ENCODE measurements at regions of chr21 and their contacts with region 1.

Region 1: DNA sequence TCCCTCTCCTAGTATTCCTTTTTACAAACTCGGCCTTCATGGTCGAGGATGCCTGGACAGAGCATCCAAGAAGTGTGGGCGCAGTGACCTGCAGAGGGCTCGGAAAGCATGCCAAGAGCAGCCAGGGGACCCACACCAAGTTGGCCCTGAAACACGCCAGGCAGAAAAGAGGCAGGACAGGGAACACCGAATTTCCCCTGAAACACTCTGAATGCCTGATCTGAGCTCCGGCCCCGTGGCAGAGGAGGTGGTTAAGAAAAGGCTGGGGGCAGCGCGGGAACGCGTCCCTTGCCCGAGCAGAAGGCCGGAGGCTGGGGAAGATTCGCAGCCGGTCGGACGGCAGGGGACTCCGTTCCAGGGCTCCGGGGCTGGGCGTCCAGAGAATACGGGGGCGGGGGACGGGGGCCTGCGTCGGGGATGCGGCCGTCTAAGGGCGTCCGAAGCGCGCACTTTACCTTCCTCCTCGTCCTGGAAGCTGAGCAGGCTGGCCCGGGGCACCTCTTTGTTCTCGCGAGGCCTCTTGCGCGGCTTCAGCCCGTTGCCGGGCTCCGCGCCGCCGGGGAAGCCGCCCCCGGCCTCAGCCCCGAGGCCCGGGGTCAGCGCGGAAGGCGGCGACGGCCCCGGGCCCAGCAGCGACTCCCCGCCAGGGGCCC is 558 bp downstream of the PAXBP1 start:
- DNase-seq: peak; percentile 83
- H3K4me3 ChIP-seq: peak overlapping the region; percentile 88
- H3K27ac ChIP-seq: peak overlapping the region; percentile 87
- H3K4me1 ChIP-seq: peaks cover 26% of the 10 kb centered on the region
- CTCF ChIP-seq: no peak

Region 2: DNA sequence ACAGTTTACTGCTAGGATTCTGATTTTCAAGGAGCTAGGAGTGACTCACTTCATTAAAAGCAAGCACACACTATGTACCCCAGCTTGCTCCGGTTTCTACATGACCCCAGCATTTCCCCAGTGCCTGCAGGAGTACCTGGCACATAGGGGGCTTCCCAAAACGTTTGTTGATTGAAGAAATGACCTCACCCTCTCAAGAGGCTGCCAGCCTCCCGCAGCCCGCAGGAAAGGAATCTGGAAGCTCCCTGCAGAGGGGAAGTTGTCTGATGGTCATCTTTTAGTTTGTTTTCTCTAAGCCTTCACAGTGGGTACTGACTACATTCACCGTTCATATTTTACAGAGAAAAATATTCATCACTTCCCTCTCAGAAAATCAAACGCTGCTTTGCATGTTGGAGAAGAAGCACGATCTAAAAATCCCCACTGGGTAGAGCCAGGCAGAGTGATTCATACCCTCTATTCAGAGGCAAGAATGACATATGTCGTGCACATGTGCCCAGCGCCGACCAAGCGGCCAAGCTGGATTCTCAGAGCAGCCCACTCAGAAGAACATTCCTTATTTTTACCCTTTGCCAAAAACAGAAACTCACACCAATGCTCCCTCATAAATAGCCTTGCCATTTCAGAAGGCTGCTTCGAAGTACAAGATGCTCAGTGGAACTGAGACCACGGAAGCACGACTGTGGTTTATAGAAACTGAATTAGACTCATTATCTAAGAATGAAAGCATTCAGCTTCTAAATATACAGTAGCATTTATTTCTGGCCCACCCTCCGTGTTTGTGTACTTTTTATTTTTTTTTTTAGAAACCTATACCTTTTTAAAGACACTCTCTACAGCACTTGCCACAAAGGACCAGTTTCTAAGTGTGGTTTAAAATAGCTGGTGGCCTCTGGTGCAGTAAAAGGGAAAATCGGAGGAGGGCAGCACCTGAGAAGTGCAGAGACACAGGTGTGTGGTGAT is 635.3 kb before region 1 on chr21:
- CTCF ChIA-PET with region 1: no interaction called
- POLR2A ChIA-PET with region 1: no interaction called
- intact Hi-C with region 1: no loop called
- DNase-seq: no peak
- H3K4me3 ChIP-seq: no peak overlapping the region
- H3K27ac ChIP-seq: no peak overlapping the region
- H3K4me1 ChIP-seq: no peaks in the 10 kb centered on the region
- CTCF ChIP-seq: no peak

Region 3: GRCh38 chr21:32270748-32271147 is 500.2 kb before region 1 on chr21:
- CTCF ChIA-PET with region 1: no interaction called
- POLR2A ChIA-PET with region 1: interaction called, 4 read pairs
- intact Hi-C with region 1: loop called (anchors 5 kb)
- DNase-seq: no peak
- H3K4me3 ChIP-seq: no peak overlapping the region
- H3K27ac ChIP-seq: no peak overlapping the region
- H3K4me1 ChIP-seq: peaks cover 2% of the 10 kb centered on the region
- CTCF ChIP-seq: no peak

Region 4: GRCh38 chr21:32392880-32393676 is 377.9 kb before region 1 on chr21 and contains the start of gene URB1:
- CTCF ChIA-PET with region 1: no interaction called
- POLR2A ChIA-PET with region 1: no interaction called
- intact Hi-C with region 1: loop called (anchors 5 kb)
- DNase-seq: peak; percentile 91
- H3K4me3 ChIP-seq: peak within 1 kb of the TSS; percentile 86
- H3K27ac ChIP-seq: peak within 1 kb of the TSS; percentile 35
- H3K4me1 ChIP-seq: peaks cover 34% of the 10 kb centered on the region
- CTCF ChIP-seq: no peak
- total RNA-seq, gene URB1: 19.4 and 20.8 TPM in 2 replicates

Region 5: DNA sequence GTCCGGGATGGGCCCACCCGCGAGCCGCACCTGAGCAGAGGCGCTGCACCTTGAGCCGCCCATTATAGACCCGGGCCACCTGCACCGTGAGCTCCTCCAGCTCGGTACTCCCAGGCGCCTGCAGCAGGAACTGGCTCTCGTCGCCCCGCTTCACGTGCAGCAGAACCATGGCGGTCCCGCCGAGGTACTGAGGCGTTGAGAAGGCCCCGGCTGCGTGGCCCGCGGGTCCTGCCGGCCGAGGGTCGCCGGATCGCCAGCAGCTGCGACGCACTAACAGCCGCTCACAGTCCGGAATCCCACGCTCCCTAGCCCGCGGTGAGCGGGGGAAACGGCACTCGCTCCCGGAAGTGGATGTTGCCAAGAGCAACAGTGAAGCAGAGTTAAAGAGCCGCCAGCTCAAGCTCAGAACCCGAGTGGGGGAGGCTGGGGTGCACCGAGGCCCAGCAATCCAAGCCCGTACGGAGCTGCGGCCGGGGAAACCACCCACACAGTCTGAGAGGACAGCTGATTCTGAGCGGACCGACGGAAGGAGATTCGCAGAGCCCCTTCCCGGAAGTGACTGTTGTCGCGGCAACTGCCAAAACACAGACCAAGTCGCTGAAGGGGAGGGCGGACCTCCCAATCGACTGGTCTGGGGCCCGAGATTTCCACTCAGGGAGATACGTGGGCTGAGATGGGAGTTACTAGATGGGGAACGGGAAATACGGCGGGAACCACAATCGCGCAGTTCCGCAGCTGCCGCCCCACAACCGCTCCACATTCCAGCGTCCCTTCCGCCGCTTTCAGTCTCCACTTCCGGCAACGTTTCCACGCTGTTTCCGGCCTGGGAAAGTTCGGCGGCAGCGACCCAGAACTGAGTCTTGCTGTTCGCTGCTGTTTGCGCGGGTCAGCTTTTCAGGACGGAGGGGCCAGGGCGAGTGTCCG is 158.7 kb before region 1 on chr21 and contains the start of gene CFAP298:
- CTCF ChIA-PET with region 1: no interaction called
- POLR2A ChIA-PET with region 1: interaction called, 3 read pairs
- intact Hi-C with region 1: loop called (anchors 1 kb)
- DNase-seq: peak; percentile 89
- H3K4me3 ChIP-seq: peak within 1 kb of the TSS; percentile 88
- H3K27ac ChIP-seq: peak within 1 kb of the TSS; percentile 80
- H3K4me1 ChIP-seq: peaks cover 10% of the 10 kb centered on the region
- CTCF ChIP-seq: no peak
- total RNA-seq, gene CFAP298: 43.6 and 56.0 TPM in 2 replicates

Region 6: DNA sequence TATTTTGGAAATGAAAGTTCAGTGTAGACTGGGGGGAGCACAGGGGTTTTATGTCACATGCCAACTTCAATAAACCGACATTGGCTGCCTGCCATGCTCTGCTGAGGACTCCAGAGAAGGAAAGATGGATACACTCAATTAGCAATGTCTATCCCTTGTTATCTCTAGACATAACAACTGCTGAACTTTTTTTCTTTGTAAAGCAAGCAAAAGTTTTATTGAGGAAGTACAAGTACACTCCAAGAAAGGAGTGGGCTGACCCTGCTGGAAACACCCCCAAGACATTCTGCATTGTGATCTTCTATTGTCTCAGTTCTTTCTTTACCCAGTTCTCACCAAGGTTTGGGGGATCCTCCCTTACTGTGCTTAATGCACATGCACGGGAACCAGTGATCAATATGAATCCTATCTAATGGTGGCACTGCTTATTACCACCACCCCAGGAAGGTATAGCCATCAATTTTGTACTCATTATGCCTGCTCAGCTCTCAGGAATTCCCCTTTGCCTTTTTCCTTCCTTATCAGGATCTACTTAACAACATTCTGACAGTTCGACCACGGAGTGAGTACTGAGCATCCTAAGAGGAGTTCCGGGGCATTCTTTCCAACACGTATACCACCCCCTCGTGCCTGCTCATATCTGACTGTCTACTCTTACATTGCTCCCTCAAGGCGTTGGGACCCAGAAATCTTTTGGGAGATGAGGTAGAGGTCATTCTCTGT is 71.9 kb before region 1 on chr21:
- CTCF ChIA-PET with region 1: no interaction called
- POLR2A ChIA-PET with region 1: no interaction called
- intact Hi-C with region 1: no loop called
- DNase-seq: no peak
- H3K4me3 ChIP-seq: no peak overlapping the region
- H3K27ac ChIP-seq: no peak overlapping the region
- H3K4me1 ChIP-seq: no peaks in the 10 kb centered on the region
- CTCF ChIP-seq: no peak

Region 7: GRCh38 chr21:32727687-32728455 is 43.1 kb before region 1 on chr21 and contains the start of gene SYNJ1:
- CTCF ChIA-PET with region 1: interaction called, 3 read pairs
- POLR2A ChIA-PET with region 1: interaction called, 8 read pairs
- intact Hi-C with region 1: loop called (anchors 1 kb)
- DNase-seq: peak; percentile 93
- H3K4me3 ChIP-seq: peak within 1 kb of the TSS; percentile 92
- H3K27ac ChIP-seq: peak within 1 kb of the TSS; percentile 30
- H3K4me1 ChIP-seq: peaks cover 19% of the 10 kb centered on the region
- CTCF ChIP-seq: no peak
- total RNA-seq, gene SYNJ1: 3.0 and 3.8 TPM in 2 replicates